ENCODE measurements at regions of chr12 and their contacts with region 1.

Region 1: GRCh38 chr12:9049520-9050133 is 60.3 kb downstream of the KLRG1 start:
- DNase-seq: peak in 7 of 9 donors; percentile 41 to 71 (median 57)
- ATAC-seq: peak; percentile 84
- H3K4me3 ChIP-seq: no peak overlapping the region
- H3K4me3 Mint-ChIP-seq: no peak overlapping the region
- H3K27ac ChIP-seq: no peak overlapping the region
- H3K27ac Mint-ChIP-seq: peak overlapping the region in 4 of 9 donors; percentile 31 to 70 (median 40)
- H3K4me1 ChIP-seq: peaks cover 5 to 6% of the 10 kb centered on the region in 2 donors
- H3K4me1 Mint-ChIP-seq: peaks cover 2 to 32% (median 13%) of the 10 kb centered on the region in 7 donors
- H3K27me3 ChIP-seq: no peaks in the 10 kb centered on the region
- H3K27me3 Mint-ChIP-seq: peaks cover 0 to 4% (median 0%) of the 10 kb centered on the region in 5 donors

Region 2: DNA sequence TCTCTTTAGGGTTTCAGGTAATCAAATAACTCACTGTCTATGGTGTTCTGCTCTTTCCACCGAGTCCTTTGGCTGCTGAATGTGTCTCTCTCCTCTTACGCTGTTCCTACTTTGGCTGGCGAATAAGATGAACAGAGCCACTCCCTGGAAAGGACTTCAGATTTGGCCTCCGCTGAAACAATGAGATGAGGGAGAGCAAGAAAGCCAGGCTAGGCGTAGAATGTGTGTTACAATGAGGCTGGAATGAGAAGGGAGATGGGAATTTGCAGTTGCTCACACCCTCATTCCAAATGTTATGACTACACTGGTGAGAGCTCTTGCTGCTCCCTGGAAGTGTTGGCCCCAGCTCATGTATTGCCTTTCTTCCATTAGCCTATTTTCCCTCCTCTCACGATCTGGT is 387.0 kb before region 1 on chr12 and contains the start of gene MFAP5:
- CTCF ChIA-PET with region 1: interaction called, 4 read pairs
- POLR2A ChIA-PET with region 1: no interaction called
- intact Hi-C with region 1: loop called (anchors 1 kb)
- DNase-seq: no peak
- ATAC-seq: no peak
- H3K4me3 ChIP-seq: no peak within 1 kb of the TSS
- H3K4me3 Mint-ChIP-seq: no peak within 1 kb of the TSS
- H3K27ac ChIP-seq: no peak within 1 kb of the TSS
- H3K27ac Mint-ChIP-seq: no peak within 1 kb of the TSS
- H3K4me1 ChIP-seq: no peaks in the 10 kb centered on the region
- H3K4me1 Mint-ChIP-seq: peaks cover 0 to under 1% (median 0%) of the 10 kb centered on the region in 7 donors
- H3K27me3 ChIP-seq: no peaks in the 10 kb centered on the region
- H3K27me3 Mint-ChIP-seq: peaks cover 5 to 16% (median 8%) of the 10 kb centered on the region in 5 donors
- total RNA-seq, gene MFAP5: not detected

Region 3: GRCh38 chr12:8687846-8688601 is 361.6 kb before region 1 on chr12:
- CTCF ChIA-PET with region 1: interaction called, 10 read pairs
- POLR2A ChIA-PET with region 1: no interaction called
- intact Hi-C with region 1: no loop called
- DNase-seq: peak in 4 of 9 donors; percentile 14 to 16 (median 14)
- ATAC-seq: peak; percentile 55
- H3K4me3 ChIP-seq: no peak overlapping the region
- H3K4me3 Mint-ChIP-seq: no peak overlapping the region
- H3K27ac ChIP-seq: no peak overlapping the region
- H3K27ac Mint-ChIP-seq: no peak overlapping the region
- H3K4me1 ChIP-seq: peaks cover 0 to 8% of the 10 kb centered on the region in 2 donors
- H3K4me1 Mint-ChIP-seq: peaks cover 0 to 15% (median 10%) of the 10 kb centered on the region in 7 donors
- H3K27me3 ChIP-seq: no peaks in the 10 kb centered on the region
- H3K27me3 Mint-ChIP-seq: peaks cover 0 to 38% (median 0%) of the 10 kb centered on the region in 5 donors

Region 4: GRCh38 chr12:8780389-8780788 is 269.2 kb before region 1 on chr12:
- CTCF ChIA-PET with region 1: interaction called, 3 read pairs
- POLR2A ChIA-PET with region 1: no interaction called
- intact Hi-C with region 1: loop called in 1 of 2 experiments (anchors 1 kb)
- DNase-seq: peak in 2 of 9 donors; percentile 7 to 12
- ATAC-seq: no peak
- H3K4me3 ChIP-seq: no peak overlapping the region
- H3K4me3 Mint-ChIP-seq: no peak overlapping the region
- H3K27ac ChIP-seq: no peak overlapping the region
- H3K27ac Mint-ChIP-seq: no peak overlapping the region
- H3K4me1 ChIP-seq: no peaks in the 10 kb centered on the region
- H3K4me1 Mint-ChIP-seq: no peaks in the 10 kb centered on the region
- H3K27me3 ChIP-seq: no peaks in the 10 kb centered on the region
- H3K27me3 Mint-ChIP-seq: peaks cover 0 to 5% (median 0%) of the 10 kb centered on the region in 5 donors

Region 5: DNA sequence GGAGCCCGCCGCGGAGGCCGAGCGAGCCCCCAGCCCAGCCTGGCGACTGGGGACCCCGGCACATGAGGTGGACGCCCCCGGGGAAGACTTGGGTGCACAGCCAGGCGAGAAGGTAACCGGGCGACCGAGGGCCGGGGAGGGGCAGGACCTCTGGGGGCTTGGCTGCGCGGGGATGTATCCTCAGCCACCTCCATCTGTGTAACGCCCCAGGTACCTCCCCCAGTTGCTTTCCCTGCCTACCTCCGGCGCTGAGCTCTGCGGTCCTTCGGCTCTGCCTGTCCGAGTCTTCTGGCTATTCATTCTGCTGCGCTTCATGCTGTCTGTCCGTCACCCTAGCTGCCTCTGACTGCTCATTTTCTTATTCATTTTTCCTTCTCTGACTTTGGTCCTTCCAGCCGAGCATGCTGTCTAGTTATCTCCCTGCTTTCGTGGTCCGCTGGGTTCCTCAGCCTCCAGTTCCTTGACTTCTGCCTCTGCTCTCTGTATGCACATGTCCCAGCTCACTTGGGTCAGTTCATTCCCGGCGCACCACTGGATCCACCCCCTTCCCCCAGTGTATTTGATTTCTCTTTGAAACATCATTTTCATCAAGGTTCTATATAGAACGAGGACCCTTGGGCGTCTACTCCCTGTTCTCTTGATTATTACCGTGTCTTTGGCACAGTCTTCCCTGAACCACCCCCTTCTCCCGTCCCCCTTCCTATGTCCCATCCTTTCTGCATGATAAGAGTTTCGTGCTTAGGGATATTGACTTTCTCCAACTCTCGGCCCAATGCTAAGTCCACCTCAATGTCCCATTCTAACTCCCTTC is 134.7 kb before region 1 on chr12:
- CTCF ChIA-PET with region 1: interaction called, 14 read pairs
- POLR2A ChIA-PET with region 1: interaction called, 3 read pairs
- intact Hi-C with region 1: loop called (anchors 1 to 2 kb)
- DNase-seq: peak; percentile 37 to 68 (median 60)
- ATAC-seq: peak; percentile 83
- H3K4me3 ChIP-seq: peak overlapping the region; percentile 73
- H3K4me3 Mint-ChIP-seq: no peak overlapping the region
- H3K27ac ChIP-seq: peak overlapping the region; percentile 79
- H3K27ac Mint-ChIP-seq: no peak overlapping the region
- H3K4me1 ChIP-seq: peaks cover 14 to 25% of the 10 kb centered on the region in 2 donors
- H3K4me1 Mint-ChIP-seq: peaks cover 7 to 20% (median 16%) of the 10 kb centered on the region in 7 donors
- H3K27me3 ChIP-seq: no peaks in the 10 kb centered on the region
- H3K27me3 Mint-ChIP-seq: peaks cover 0 to 16% (median 0%) of the 10 kb centered on the region in 5 donors

Region 6: GRCh38 chr12:9039397-9039977 is 10.1 kb before region 1 on chr12:
- CTCF ChIA-PET with region 1: interaction called, 15 read pairs
- POLR2A ChIA-PET with region 1: interaction called, 5 read pairs
- intact Hi-C with region 1: loop called in 1 of 2 experiments (anchors 1 kb)
- DNase-seq: peak in 7 of 9 donors; percentile 37 to 77 (median 67)
- ATAC-seq: peak; percentile 93
- H3K4me3 ChIP-seq: no peak overlapping the region
- H3K4me3 Mint-ChIP-seq: peak overlapping the region in 7 of 10 donors; percentile 3 to 68 (median 47)
- H3K27ac ChIP-seq: peak overlapping the region; percentile 2
- H3K27ac Mint-ChIP-seq: peak overlapping the region in 8 of 9 donors; percentile 59 to 78 (median 70)
- H3K4me1 ChIP-seq: peaks cover 33 to 40% of the 10 kb centered on the region in 2 donors
- H3K4me1 Mint-ChIP-seq: peaks cover 19 to 61% (median 50%) of the 10 kb centered on the region in 7 donors
- H3K27me3 ChIP-seq: no peaks in the 10 kb centered on the region
- H3K27me3 Mint-ChIP-seq: peaks cover 0 to 19% (median 0%) of the 10 kb centered on the region in 5 donors

Measured in naive thymus-derived CD4-positive, alpha-beta T cell (primary cell).